ENCODE measurements at regions of chr3 and their contacts with region 1.

Region 1: GRCh38 chr3:21551019-21551418 is 200.0 kb downstream of the ZNF385D start:
- DNase-seq: peak in 2 of 4 experiments; percentile 14 to 61
- ATAC-seq: peak; percentile 87
- H3K4me3 ChIP-seq: no peak overlapping the region
- H3K27ac ChIP-seq: peak overlapping the region; percentile 17; the same call in 1 of the 3 replicates
- H3K4me1 ChIP-seq: no peaks in the 10 kb centered on the region; a peak in 1 of 5 replicates
- H3K27me3 ChIP-seq: no peaks in the 10 kb centered on the region
- CTCF ChIP-seq: peak; percentile 26 to 54 (median 37); a peak in 3 of 6 replicates
- EP300 ChIP-seq: no peak
- POLR2A ChIP-seq: no peak
- RAD21 ChIP-seq: peak; percentile 54 to 67

Region 2: GRCh38 chr3:21484057-21484827 is 66.8 kb before region 1 on chr3:
- CTCF ChIA-PET with region 1: no interaction called
- POLR2A ChIA-PET with region 1: no interaction called
- in situ Hi-C with region 1: no loop called
- intact Hi-C with region 1: loop called (anchors 2 kb)
- DNase-seq: peak; percentile 21 to 72 (median 24)
- ATAC-seq: peak; percentile 87
- H3K4me3 ChIP-seq: no peak overlapping the region
- H3K27ac ChIP-seq: no peak overlapping the region
- H3K4me1 ChIP-seq: no peaks in the 10 kb centered on the region; a peak in 1 of 5 replicates
- H3K27me3 ChIP-seq: no peaks in the 10 kb centered on the region
- CTCF ChIP-seq: peak; percentile 59 to 67 (median 65)
- EP300 ChIP-seq: no peak
- POLR2A ChIP-seq: no peak
- RAD21 ChIP-seq: peak; percentile 64 to 82

Measured in K562 (cell line).